ENCODE measurements at regions of chr4 and their contacts with region 1.

Region 1: GRCh38 chr4:83074086-83074704 is 39.2 kb downstream of the COPS4 start:
- DNase-seq: peak; percentile 49
- H3K4me3 Mint-ChIP-seq: peak overlapping the region; percentile 16
- H3K27ac Mint-ChIP-seq: no peak overlapping the region
- H3K4me1 Mint-ChIP-seq: peaks cover 8% of the 10 kb centered on the region
- H3K27me3 Mint-ChIP-seq: no peaks in the 10 kb centered on the region

Region 2: DNA sequence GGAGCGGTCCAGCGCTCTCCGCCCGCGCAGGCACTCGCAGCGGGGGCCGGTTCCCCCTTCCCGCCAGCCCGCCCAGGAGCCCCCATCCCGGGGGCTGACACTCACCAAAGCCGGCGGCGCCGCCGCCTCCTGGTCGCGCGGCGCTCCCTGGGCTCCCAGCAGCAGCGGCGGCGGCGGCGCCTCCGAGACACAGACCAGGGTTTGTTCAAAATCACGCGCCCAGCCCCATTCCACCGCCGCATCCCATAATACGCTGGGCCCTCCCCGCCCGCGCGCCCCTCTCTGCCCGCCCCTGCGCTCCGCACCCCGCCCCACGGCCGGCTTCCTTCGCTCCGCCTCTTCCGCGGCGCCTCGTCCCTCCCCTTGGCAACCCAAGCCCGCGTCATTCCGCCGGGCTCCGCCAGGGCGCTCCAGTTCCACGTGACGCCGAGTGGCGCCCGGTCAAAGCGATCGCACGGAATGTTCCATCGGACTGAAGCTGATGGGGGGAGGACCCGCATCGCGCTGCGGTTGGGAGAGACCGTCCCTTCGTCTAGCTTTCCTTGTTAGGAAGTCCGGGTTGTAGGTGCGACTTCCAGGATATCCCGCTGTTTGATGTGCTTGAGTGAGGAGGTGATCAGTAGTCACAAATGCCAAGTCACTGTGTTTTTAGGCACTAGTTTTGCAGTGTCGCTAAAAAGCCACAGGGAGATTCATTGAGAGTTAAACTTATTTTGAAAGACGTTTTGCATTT is 61.3 kb before region 1 on chr4:
- CTCF ChIA-PET with region 1: interaction called, 6 read pairs
- POLR2A ChIA-PET with region 1: no interaction called
- intact Hi-C with region 1: loop called (anchors 2 kb)
- DNase-seq: peak; percentile 98
- H3K4me3 Mint-ChIP-seq: peak overlapping the region; percentile 92
- H3K27ac Mint-ChIP-seq: peak overlapping the region; percentile 92
- H3K4me1 Mint-ChIP-seq: peaks cover 36% of the 10 kb centered on the region
- H3K27me3 Mint-ChIP-seq: no peaks in the 10 kb centered on the region

Region 3: GRCh38 chr4:83217721-83218522 is 143.7 kb after region 1 on chr4:
- CTCF ChIA-PET with region 1: interaction called, 14 read pairs
- POLR2A ChIA-PET with region 1: no interaction called
- intact Hi-C with region 1: loop called (anchors 1 kb)
- DNase-seq: peak; percentile 76
- H3K4me3 Mint-ChIP-seq: peak overlapping the region; percentile 22
- H3K27ac Mint-ChIP-seq: peak overlapping the region; percentile 52
- H3K4me1 Mint-ChIP-seq: peaks cover 60% of the 10 kb centered on the region
- H3K27me3 Mint-ChIP-seq: peaks cover 5% of the 10 kb centered on the region

Region 4: DNA sequence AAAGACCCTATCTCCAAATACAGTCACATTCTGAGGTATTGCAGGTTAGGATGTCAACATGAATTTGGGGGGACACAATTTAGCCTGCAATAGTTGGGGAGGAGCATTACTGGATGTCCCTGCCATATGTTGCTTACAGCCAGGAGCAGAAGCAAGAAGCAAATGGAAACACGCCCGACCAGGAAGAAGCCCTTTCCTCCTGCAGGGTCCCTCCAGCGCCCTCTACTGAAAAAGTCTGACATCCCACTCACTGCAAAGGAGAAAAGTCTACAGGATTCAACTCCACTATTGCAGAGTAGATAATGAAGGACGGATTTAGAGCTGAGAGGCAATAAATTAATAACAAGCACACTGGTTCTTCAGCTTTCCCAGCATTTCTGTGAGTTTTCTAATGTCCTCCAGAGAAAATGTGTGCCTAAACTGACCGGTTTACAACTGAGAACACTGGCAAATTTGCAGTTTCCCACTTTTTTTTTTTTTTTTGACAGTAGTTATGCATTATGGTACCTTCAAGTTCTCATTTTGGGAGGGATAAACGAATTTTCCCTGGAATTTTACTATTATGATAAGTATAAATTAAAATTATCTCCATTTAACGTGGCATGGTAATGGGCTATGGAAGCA is 178.7 kb after region 1 on chr4:
- CTCF ChIA-PET with region 1: interaction called, 16 read pairs
- POLR2A ChIA-PET with region 1: no interaction called
- intact Hi-C with region 1: loop called (anchors 1 kb)
- DNase-seq: peak; percentile 78
- H3K4me3 Mint-ChIP-seq: no peak overlapping the region
- H3K27ac Mint-ChIP-seq: no peak overlapping the region
- H3K4me1 Mint-ChIP-seq: peaks cover 9% of the 10 kb centered on the region
- H3K27me3 Mint-ChIP-seq: no peaks in the 10 kb centered on the region

Region 5: DNA sequence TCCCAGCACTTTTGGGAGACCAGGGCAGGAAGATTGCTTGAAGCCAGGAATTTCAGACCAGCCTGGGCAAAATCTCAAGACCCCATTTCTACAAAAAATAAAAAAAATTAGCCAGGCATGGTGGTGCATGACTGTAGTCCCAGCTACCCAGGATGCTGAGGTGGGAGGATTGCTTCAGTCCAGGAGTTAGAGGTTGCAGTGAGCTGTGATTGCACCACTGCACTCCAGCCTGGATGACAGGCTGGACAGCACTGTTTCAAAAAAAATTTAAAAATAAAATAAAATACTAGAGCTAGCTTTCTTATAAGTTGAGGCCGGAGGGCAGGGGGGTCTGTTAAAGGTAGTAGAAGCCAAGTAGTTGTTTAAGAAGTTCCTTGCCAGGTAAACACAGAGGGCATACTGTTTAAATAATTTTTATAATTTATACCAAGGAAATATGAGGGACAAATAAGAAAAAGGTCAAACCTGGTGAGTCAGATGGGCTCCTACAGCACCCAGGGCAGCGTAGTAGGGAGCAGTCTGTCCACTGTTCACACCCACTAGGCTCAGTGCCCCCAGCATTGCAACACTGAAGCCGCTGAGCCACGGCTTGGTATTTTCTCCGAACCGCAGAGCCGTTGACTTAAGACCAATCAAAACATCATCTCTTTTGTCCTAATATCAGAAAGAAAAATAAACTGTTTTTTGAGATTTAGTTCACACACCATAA is 193.1 kb after region 1 on chr4:
- CTCF ChIA-PET with region 1: interaction called, 18 read pairs
- POLR2A ChIA-PET with region 1: no interaction called
- intact Hi-C with region 1: no loop called
- DNase-seq: no peak
- H3K4me3 Mint-ChIP-seq: no peak overlapping the region
- H3K27ac Mint-ChIP-seq: no peak overlapping the region
- H3K4me1 Mint-ChIP-seq: peaks cover 13% of the 10 kb centered on the region
- H3K27me3 Mint-ChIP-seq: no peaks in the 10 kb centered on the region

Region 6: DNA sequence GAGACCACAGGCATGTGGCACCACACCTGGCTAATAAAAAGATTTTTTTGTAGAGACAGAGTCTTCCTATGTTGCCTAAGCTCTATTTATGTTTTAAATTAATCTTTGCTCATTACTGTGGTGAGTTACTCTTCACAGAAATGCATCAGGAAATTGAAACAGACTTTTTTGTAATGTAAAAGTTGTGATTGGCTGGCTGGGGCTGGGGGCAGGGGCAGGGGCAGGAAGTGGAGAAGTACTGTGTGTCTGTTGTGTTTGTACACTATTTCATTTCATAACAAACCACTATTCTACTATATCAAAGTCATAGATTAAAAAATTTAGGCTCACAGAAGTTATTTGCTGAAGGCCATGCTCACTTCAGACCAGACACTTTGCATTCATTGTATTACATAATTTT is 429.8 kb after region 1 on chr4:
- CTCF ChIA-PET with region 1: no interaction called
- POLR2A ChIA-PET with region 1: no interaction called
- intact Hi-C with region 1: no loop called
- DNase-seq: peak; percentile 41
- H3K4me3 Mint-ChIP-seq: no peak overlapping the region
- H3K27ac Mint-ChIP-seq: no peak overlapping the region
- H3K4me1 Mint-ChIP-seq: peaks cover 8% of the 10 kb centered on the region
- H3K27me3 Mint-ChIP-seq: no peaks in the 10 kb centered on the region

Region 7: DNA sequence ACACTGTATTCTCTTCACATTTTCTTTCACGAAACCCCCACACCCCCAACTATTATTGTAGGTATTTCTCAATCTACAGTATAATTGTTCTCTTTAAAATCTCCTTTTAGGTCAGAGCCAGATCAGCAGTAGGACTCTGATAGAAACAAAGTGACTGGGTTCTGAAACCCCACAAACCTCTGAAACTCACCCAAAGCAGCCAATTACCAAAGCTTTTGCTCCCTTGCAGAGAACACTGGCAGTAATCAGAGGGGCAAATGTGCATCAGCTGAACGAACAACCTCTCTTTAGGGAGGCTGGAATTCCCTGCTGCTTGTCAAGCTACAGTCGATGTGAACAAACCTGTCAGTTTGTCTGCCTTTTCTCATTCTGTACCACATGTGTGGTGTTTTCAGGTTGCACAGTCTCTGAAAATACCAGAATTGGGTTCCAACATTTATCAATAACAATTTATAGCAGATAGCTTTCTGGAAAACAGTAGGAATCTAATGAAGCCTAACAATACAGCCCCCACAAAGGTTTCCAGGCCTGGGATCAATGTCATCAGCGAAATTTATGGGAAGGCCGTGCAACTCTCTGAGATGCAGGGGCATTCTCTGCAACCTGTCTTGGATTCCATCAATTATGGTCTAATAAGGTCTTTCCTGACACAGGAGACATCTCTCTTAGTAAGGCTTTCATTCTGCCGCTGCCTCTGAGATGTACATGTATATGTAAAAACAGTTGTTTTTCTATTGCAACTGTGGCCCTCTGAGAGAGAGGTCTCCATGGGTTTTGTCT is 857.7 kb after region 1 on chr4:
- CTCF ChIA-PET with region 1: no interaction called
- POLR2A ChIA-PET with region 1: no interaction called
- intact Hi-C with region 1: no loop called
- DNase-seq: no peak
- H3K4me3 Mint-ChIP-seq: no peak overlapping the region
- H3K27ac Mint-ChIP-seq: no peak overlapping the region
- H3K4me1 Mint-ChIP-seq: no peaks in the 10 kb centered on the region
- H3K27me3 Mint-ChIP-seq: no peaks in the 10 kb centered on the region